ENCODE measurements at regions of chr3 and their contacts with region 1.

Region 1: DNA sequence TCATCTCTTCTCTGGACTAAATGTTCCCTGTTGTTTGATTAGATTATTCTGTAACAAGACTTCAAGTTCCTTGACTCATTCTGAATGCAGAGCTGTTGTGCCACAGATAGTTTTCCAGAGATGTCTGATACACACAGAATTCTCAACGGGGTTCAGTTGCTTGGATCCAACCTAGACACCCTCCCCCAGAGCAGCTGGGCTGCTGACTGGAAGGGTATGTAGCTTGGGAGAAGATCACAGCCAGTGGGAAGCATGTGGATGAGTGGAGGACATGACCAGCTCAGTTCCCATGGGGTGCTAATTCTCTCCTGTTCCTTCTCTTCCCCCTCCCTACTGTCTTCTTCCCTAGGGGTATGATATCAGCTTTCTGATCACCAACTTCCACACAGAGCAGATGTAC is 6.6 kb upstream of the TTLL3 start:
- DNase-seq: no peak
- H3K4me3 ChIP-seq: no peak overlapping the region
- H3K27ac ChIP-seq: no peak overlapping the region
- H3K4me1 ChIP-seq: peaks cover 0 to 1% (median 0%) of the 10 kb centered on the region in 4 experiments; a peak in 1 of 7 replicates
- H3K27me3 ChIP-seq: no peaks in the 10 kb centered on the region
- CTCF ChIP-seq: no peak
- EP300 ChIP-seq: no peak
- POLR2A ChIP-seq: no peak
- RAD21 ChIP-seq: no peak

Region 2: DNA sequence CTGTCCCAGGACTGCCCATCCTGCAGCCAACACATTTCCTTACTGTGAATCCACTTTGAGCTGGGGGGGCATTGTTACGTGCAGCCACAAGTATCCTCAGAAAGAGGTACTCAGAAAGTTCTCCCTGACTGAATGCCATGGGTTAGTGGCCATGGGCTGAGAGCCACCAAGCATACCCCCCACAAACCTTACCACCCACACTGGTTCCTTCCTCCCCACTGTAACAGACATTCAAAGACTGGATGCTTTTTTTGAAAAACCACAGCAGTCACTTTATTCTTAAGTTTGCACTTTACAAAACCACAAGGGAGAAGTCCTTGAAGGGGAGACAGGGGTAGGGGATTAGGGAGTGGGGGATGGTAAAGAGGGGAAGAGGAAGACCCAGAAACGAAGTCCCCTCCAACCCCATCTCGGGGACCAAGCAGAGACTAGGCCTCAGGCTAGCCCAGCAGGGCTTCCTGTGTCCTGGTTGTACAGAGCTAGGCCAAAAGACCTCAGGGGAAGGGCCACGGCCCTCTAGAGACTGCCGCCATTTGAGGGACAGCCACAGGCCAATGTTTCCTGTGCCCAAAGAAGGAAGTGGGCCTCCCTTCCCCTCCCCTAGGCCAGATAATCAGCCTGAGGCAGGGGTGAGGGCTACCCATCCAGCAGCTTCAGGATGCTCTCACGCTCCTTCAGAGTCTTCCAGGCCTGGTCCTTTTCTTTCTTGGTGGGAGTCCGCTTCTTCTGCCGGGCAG is 23.6 kb before region 1 on chr3:
- CTCF ChIA-PET with region 1: interaction called, 11 read pairs
- POLR2A ChIA-PET with region 1: interaction called, 7 read pairs
- DNase-seq: no peak
- H3K4me3 ChIP-seq: no peak overlapping the region
- H3K27ac ChIP-seq: no peak overlapping the region
- H3K4me1 ChIP-seq: no peaks in the 10 kb centered on the region
- H3K27me3 ChIP-seq: peaks cover 0 to 3% (median 0%) of the 10 kb centered on the region in 4 experiments; a peak in 1 of 7 replicates
- CTCF ChIP-seq: no peak
- EP300 ChIP-seq: no peak
- POLR2A ChIP-seq: no peak
- RAD21 ChIP-seq: no peak